Activated T-helper 1 cell treated with anti-CD3 and anti-CD28 coated beads, Interleukin-12 subunit alpha, Interleukin-12 subunit beta, Interleukin-2, Interleukin-4 antibody, amounts not matched to agents 30 ng/mL and 10 ng/mL and 1 ng/mL, durations not matched to agents 14 hours and 24 hours and 36 hours (primary cell): ENCODE measurements at regions of chr16 and their contacts with region 1.

Region 1: DNA sequence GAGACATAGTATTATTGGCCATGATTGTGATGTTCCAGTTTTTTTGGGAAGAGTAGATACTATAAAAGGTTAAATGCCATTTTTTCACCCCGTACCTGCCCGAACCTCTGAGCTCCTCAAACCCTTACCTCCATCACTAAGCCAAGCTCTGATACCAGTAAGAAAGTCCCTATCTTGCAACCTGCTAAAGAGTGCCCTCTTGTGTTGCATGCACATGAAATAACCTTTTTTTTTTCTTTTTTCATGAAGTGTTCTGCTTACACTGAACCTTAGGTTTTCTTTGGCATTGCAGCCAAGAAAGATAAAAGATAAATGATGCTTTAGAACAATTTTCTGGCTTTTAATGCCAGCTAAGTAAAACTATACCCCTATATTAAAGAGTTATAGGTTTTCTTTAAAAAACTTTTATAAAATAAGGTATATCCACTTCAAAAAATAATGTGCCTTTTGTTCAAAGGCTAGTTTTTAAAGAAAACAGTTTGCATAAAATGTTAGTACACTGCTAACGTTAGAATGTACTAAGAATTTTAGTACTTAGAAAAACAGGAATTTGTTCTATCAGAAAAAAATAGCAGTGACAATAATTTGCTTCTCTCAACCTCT is 295.3 kb upstream of the PMFBP1 start:
- DNase-seq: no peak
- H3K4me3 Mint-ChIP-seq: no peak overlapping the region
- H3K27ac Mint-ChIP-seq: no peak overlapping the region
- H3K4me1 Mint-ChIP-seq: no peaks in the 10 kb centered on the region
- H3K27me3 Mint-ChIP-seq: peaks cover 4% of the 10 kb centered on the region

Region 2: DNA sequence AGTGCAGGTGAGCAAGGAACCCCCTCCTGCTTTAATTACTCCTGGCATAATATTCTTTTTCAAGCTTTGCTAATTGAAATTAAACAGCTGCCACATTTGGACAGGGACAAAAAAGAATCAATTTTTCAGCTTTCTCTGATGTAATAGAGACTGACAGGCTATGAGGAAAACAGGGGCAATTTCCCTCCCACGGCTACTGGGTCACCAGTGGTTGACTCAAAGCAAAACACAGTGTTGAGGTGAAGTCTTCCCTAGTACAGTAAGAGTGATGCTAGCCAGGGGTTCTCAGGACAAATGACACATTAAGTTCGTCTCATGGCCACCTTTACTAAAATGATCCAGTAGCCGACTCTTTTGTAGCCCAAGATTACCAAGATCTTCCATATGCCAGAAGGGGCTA is 256.7 kb before region 1 on chr16:
- intact Hi-C with region 1: no loop called
- DNase-seq: no peak
- H3K4me3 Mint-ChIP-seq: no peak overlapping the region
- H3K27ac Mint-ChIP-seq: no peak overlapping the region
- H3K4me1 Mint-ChIP-seq: no peaks in the 10 kb centered on the region
- H3K27me3 Mint-ChIP-seq: peaks cover 7% of the 10 kb centered on the region

Region 3: DNA sequence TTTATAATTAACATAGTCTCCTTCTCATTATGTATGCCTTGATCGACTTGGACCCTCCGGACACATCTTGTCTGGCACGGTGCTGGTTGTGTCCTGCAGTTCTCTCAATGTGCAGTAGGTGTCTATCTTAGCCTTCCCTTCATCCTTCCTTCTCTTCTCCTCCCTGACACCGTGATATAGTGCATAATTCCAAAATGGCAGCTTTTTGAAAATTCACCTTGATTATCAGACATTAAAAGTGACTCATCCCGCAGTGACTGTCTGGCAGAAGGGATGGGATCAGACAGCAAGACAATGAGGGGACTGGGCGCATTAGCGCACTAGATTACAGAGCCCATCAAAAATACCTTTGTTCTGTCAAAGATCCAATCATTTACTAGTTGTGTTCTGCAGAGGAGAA is 225.3 kb before region 1 on chr16:
- intact Hi-C with region 1: loop called (anchors 10 kb)
- DNase-seq: no peak
- H3K4me3 Mint-ChIP-seq: no peak overlapping the region
- H3K27ac Mint-ChIP-seq: no peak overlapping the region
- H3K4me1 Mint-ChIP-seq: peaks cover 17% of the 10 kb centered on the region
- H3K27me3 Mint-ChIP-seq: peaks cover 10% of the 10 kb centered on the region

Region 4: DNA sequence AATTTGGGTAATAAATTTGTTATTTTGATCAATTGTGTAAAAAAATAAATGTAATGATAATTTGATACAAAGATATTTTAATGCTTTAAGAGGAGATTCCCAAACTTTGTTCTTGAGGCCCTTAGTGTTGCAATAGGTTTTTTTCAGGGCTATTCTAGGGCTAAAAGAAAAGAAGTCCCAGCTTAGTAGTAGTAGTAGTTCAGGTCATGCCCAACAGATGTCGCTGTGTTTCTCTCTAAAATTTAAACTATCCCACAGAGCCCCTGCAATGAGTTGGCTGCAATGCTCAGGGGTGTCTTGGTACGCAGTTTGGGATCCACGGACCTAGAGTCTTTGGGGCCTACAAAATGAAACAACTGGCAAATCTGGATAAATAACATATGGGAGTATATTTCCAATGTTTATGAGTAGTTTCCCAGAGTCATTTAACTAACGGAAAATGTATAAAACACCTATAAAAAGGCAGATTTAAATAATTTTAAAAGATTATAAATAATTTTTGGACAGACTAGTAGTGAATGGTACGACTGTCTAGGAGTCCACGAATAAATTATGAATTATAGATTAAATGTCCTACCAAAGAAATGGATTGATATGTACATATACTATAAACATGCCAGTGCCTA is 66.9 kb before region 1 on chr16:
- intact Hi-C with region 1: loop called (anchors 1 kb)
- DNase-seq: peak; percentile 2
- H3K4me3 Mint-ChIP-seq: no peak overlapping the region
- H3K27ac Mint-ChIP-seq: no peak overlapping the region
- H3K4me1 Mint-ChIP-seq: no peaks in the 10 kb centered on the region
- H3K27me3 Mint-ChIP-seq: no peaks in the 10 kb centered on the region

Region 5: DNA sequence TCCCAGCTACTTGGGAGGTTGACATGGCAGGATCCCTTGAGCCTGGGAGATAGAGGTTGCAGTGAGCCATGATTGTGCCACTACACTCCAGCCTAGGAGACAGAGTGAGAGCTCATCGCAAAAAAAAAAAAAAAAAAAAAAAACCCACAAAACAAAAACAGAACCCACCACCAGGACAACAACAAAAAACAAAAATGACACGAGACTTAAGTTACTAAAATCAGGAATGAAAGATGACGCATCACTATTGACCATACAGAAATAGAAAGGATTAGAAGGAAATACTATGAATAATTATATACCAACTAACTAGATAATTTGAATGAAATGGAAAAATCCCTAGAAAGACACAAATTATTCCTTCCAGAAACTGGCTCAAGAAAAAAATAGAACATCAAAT is 137.1 kb after region 1 on chr16:
- intact Hi-C with region 1: no loop called
- DNase-seq: no peak
- H3K4me3 Mint-ChIP-seq: no peak overlapping the region
- H3K27ac Mint-ChIP-seq: no peak overlapping the region
- H3K4me1 Mint-ChIP-seq: no peaks in the 10 kb centered on the region
- H3K27me3 Mint-ChIP-seq: no peaks in the 10 kb centered on the region

Region 6: GRCh38 chr16:72705801-72706200 is 238.5 kb after region 1 on chr16:
- intact Hi-C with region 1: no loop called
- DNase-seq: no peak
- H3K4me3 Mint-ChIP-seq: no peak overlapping the region
- H3K27ac Mint-ChIP-seq: no peak overlapping the region
- H3K4me1 Mint-ChIP-seq: no peaks in the 10 kb centered on the region
- H3K27me3 Mint-ChIP-seq: peaks cover 3% of the 10 kb centered on the region